ENCODE measurements at regions of chr20 and their contacts with region 1.

Region 1: DNA sequence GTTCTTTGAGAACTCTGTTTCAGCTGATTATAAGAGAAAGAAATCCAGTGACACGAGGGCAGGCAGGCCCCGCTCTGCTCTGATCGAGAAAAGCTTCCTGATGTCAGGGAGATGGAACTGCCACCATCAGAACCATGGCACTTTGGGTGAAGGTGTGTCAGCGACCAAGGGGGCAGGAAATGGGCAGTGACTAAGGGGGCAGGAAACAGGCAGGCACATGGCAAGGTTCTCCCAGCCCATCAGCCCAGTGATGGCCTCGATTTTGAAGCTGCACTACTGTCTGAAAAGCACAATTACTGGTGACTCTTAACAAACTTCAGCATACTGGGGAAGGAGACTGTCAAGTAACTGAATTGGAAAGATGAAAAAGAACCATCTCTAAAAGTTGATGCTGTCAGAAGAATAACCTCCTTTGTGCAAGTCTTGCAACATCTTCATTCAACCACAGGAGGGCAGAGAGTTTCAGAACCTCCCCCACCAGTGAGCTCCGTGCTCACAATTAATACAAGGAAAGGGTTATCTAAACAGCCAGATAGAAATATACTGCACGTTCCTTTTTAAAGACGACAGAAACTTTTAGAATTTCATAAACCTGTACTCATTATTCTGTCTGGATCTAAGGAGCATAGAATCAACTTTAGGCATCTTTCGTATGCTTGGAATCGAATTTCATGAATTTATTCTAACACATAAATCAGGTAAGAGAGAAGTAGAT is 39.1 kb downstream of the TMX4 start:
- DNase-seq: peak; percentile 58
- H3K4me3 ChIP-seq: no peak overlapping the region
- H3K27ac ChIP-seq: no peak overlapping the region
- H3K4me1 ChIP-seq: no peaks in the 10 kb centered on the region
- H3K27me3 ChIP-seq: no peaks in the 10 kb centered on the region
- CTCF ChIP-seq: peak; percentile 52 to 53
- POLR2A ChIP-seq: no peak

Region 2: DNA sequence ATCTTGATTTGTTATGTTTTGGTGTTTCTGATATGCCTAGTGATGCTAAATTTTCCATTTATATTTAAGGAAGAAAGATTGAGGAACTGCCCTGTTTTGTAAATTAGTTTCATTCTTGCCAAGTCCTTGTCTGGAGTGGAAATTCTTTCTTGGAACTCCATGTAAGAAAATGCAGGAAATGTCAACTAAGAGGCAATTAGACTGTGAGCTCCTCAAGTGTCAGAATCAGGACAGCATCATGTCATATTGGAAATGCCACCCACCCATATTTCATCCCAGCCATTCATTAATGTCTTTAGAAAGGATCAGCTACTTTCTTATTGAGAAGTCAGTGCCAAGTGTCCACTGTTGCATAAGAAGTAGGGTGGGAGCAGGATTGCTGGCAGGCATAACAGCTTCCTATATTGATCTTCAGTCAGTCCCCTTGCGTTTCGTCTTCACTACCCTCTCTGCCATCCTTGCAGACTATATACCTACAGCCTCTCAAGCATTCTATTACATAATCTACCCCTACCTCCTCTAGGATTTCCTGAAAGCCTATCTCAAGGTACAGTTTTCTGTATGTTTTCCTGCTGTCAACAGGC is 82.6 kb before region 1 on chr20:
- CTCF ChIA-PET with region 1: no interaction called
- POLR2A ChIA-PET with region 1: no interaction called
- dilution Hi-C with region 1: no loop called
- intact Hi-C with region 1: no loop called
- DNase-seq: no peak
- H3K4me3 ChIP-seq: no peak overlapping the region
- H3K27ac ChIP-seq: no peak overlapping the region
- H3K4me1 ChIP-seq: no peaks in the 10 kb centered on the region
- H3K27me3 ChIP-seq: no peaks in the 10 kb centered on the region
- CTCF ChIP-seq: no peak
- POLR2A ChIP-seq: no peak

Region 3: DNA sequence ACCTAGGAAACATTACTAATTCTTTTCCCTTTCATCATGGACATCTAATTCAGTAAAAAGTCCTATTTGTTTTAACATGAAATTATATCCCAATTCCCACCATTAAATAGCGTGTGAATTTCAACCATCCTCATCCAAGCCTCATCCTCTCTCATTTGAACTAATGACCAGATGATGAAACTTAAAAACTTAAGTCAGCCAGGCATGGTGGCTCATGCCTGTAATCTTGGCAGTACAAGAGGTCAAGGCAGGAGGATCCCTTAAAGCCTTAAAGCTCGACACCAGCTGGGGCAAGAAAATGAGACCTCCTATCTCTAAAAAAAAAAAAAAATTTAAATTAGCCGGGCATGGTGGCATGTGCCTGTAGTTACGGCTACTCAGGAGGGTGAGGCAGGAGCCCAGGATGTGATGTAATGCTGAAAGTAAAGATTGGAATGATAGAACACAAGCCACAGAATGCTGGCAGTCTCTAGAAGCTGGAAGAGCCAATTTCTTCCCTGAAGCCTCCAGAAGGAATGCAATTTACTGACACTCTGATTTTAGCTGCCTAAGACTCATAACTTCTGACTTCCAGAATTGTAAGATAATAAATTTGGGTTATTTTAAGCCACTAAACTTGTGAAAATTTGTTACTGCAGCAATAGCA is 13.2 kb before region 1 on chr20:
- CTCF ChIA-PET with region 1: interaction called, 17 read pairs
- POLR2A ChIA-PET with region 1: no interaction called
- dilution Hi-C with region 1: no loop called
- intact Hi-C with region 1: no loop called
- DNase-seq: no peak
- H3K4me3 ChIP-seq: no peak overlapping the region
- H3K27ac ChIP-seq: no peak overlapping the region
- H3K4me1 ChIP-seq: no peaks in the 10 kb centered on the region
- H3K27me3 ChIP-seq: no peaks in the 10 kb centered on the region
- CTCF ChIP-seq: no peak
- POLR2A ChIP-seq: no peak

Measured in endothelial cell of umbilical vein (primary cell).